Body of pancreas (tissue), 4 donors: ENCODE measurements at regions of chr10 and their contacts with region 1.

Region 1: GRCh38 chr10:93916257-93917063 is 22.7 kb downstream of the SLC35G1 start:
- DNase-seq: no peak
- ATAC-seq: peak; percentile 72
- H3K4me3 ChIP-seq: no peak overlapping the region
- H3K27ac ChIP-seq: no peak overlapping the region
- H3K4me1 ChIP-seq: peaks cover 13% of the 10 kb centered on the region
- H3K27me3 ChIP-seq: no peaks in the 10 kb centered on the region
- CTCF ChIP-seq: peak; percentile 17 to 72 (median 62)
- POLR2A ChIP-seq: no peak

Region 2: GRCh38 chr10:93977442-93977841 is 61.0 kb after region 1 on chr10:
- intact Hi-C with region 1: no loop called
- DNase-seq: no peak
- ATAC-seq: no peak
- H3K4me3 ChIP-seq: no peak overlapping the region
- H3K27ac ChIP-seq: no peak overlapping the region
- H3K4me1 ChIP-seq: no peaks in the 10 kb centered on the region
- H3K27me3 ChIP-seq: no peaks in the 10 kb centered on the region
- CTCF ChIP-seq: peak in 1 of 7 experiments; percentile 2
- POLR2A ChIP-seq: no peak

Region 3: DNA sequence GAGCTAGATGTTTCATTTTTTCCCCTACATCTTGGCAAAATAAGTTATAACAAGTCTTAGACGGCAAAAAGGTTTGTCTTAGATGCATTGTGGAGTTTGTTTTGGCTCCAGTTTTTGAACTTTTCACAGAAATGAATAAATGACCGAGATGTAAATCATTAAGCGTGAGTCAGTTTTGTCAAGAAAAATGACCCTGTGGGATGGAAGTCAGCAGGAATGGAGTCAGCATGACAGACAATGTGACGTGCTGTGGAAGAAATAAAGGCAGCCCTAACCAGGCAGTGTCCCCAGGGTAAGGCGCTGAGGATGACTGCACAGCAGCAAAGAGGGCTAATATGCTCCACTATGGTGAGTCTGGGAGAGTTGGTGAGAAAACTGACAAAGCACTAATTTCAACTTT is 283.1 kb after region 1 on chr10:
- intact Hi-C with region 1: no loop called
- DNase-seq: no peak
- ATAC-seq: no peak
- H3K4me3 ChIP-seq: no peak overlapping the region
- H3K27ac ChIP-seq: no peak overlapping the region
- H3K4me1 ChIP-seq: no peaks in the 10 kb centered on the region
- H3K27me3 ChIP-seq: no peaks in the 10 kb centered on the region
- CTCF ChIP-seq: no peak
- POLR2A ChIP-seq: no peak

Region 4: DNA sequence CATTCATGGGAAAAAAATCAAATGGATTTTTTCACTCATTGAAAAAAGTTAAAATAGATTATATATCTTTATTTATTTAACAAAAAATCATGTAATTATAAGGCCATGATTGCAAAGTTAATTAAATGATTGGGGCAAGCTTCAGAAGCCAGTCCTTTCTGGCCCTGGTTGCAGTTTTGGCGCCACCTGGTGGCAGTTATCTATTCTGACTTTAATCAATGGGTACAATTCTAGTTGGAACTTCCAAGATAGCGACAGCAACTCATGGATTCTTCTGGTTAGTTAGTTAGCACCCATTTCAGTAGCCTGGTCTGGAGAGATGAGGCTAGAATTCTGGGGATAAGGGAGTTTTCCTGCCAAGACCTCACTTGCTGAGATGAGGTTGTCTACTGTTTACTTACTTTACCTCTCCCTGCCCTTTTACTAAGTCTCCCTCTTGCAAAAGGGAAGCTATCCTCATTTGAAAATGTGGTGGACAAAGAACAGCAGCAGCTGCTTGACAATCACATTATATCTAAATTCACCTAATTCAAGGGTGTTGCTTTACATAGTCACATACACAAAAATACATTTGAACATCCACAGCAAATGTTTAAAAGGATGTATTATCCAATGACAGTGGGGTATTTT is 403.9 kb after region 1 on chr10:
- intact Hi-C with region 1: loop called (anchors 5 kb)
- DNase-seq: peak; percentile 73 to 81 (median 77)
- ATAC-seq: peak; percentile 43
- H3K4me3 ChIP-seq: no peak overlapping the region
- H3K27ac ChIP-seq: no peak overlapping the region
- H3K4me1 ChIP-seq: peaks cover 11% of the 10 kb centered on the region
- H3K27me3 ChIP-seq: no peaks in the 10 kb centered on the region
- CTCF ChIP-seq: peak; percentile 66 to 96 (median 79)
- POLR2A ChIP-seq: no peak